SK-N-SH (cell line): ENCODE measurements at regions of chr10 and their contacts with region 1.

Region 1: GRCh38 chr10:92290837-92291615 is at the starts of genes CPEB3 and MARCHF5:
- DNase-seq: peak; percentile 96
- H3K4me3 ChIP-seq: peak within 1 kb of the TSS; percentile 95 to 98
- H3K27ac ChIP-seq: peak within 1 kb of the TSS; percentile 77 to 87
- H3K4me1 ChIP-seq: peaks cover 4% of the 10 kb centered on the region in 2 experiments; a peak in 2 of 4 replicates
- H3K27me3 ChIP-seq: no peaks in the 10 kb centered on the region
- CTCF ChIP-seq: peak; percentile 57
- EP300 ChIP-seq: peak in 1 of 2 experiments; percentile 28; a peak in 1 of 4 replicates
- RAD21 ChIP-seq: peak; percentile 35
- polyA plus RNA-seq, gene CPEB3: 0.36 TPM in 2 replicates
- polyA plus RNA-seq, gene MARCHF5: 24.2 and 32.0 TPM in 2 replicates

Region 2: GRCh38 chr10:92087750-92088395 is 203.2 kb before region 1 on chr10:
- CTCF ChIA-PET with region 1: interaction called, 51 read pairs
- POLR2A ChIA-PET with region 1: no interaction called
- DNase-seq: peak; percentile 76
- H3K4me3 ChIP-seq: no peak overlapping the region; a peak in 1 of 4 replicates
- H3K27ac ChIP-seq: peak overlapping the region; percentile 40 to 43; a peak in 2 of 4 replicates
- H3K4me1 ChIP-seq: peaks cover 0 to 2% of the 10 kb centered on the region in 2 experiments; a peak in 2 of 4 replicates
- H3K27me3 ChIP-seq: no peaks in the 10 kb centered on the region
- CTCF ChIP-seq: peak; percentile 88
- EP300 ChIP-seq: no peak; a peak in 1 of 4 replicates
- RAD21 ChIP-seq: peak; percentile 99

Region 3: GRCh38 chr10:92303096-92303495 is 12.1 kb after region 1 on chr10:
- CTCF ChIA-PET with region 1: interaction called, 20 read pairs
- POLR2A ChIA-PET with region 1: no interaction called
- DNase-seq: no peak
- H3K4me3 ChIP-seq: no peak overlapping the region
- H3K27ac ChIP-seq: no peak overlapping the region
- H3K4me1 ChIP-seq: peaks cover 0 to 18% of the 10 kb centered on the region in 2 experiments; a peak in 1 of 4 replicates
- H3K27me3 ChIP-seq: no peaks in the 10 kb centered on the region
- CTCF ChIP-seq: no peak
- EP300 ChIP-seq: no peak
- RAD21 ChIP-seq: no peak